ENCODE measurements at regions of chr5 and their contacts with region 1.

Region 1: DNA sequence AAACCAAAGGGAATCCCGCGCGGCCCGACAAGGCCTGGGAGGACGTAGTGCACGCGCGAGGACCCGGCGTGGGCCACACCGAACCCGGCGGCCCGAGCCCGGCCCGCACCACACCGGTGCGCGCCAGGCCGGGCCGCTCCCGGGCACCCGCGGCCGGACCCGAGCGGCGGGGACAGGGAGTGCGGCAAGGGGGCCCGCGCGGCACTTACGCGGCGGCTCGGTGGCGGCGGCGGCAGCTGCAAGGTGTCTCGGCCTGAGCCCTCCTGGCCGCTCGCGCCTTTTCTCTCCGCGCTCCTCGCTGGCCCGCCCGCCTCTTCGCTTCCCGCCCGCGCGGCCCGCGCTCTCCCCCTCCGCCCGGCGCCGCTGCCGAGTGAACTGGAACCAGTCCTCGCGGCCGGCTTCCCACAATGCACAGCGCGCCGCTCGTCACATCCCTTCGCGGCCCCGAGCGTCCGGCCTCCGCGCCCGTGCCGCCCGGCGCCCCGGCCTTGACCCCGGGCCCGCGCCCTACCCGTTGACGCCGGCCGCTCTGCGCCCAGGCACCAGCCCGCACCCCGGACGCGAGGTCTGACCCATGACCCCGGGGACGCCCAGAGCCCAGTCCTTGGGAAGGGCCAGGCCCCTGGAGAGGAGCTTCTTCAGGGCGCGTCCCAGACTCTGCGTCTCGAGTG is at the start of gene MACROH2A1:
- DNase-seq: peak; percentile 81
- H3K4me3 Mint-ChIP-seq: peak within 1 kb of the TSS; percentile 94
- H3K27ac Mint-ChIP-seq: peak within 1 kb of the TSS; percentile 98
- H3K4me1 Mint-ChIP-seq: peaks cover 46% of the 10 kb centered on the region
- H3K27me3 Mint-ChIP-seq: peaks cover 9% of the 10 kb centered on the region
- total RNA-seq, gene MACROH2A1: 285 and 302 TPM in 2 replicates

Region 2: GRCh38 chr5:135364421-135365262 is 34.3 kb before region 1 on chr5:
- intact Hi-C with region 1: loop called (anchors 5 kb)
- DNase-seq: no peak
- H3K4me3 Mint-ChIP-seq: no peak overlapping the region
- H3K27ac Mint-ChIP-seq: no peak overlapping the region
- H3K4me1 Mint-ChIP-seq: peaks cover 42% of the 10 kb centered on the region
- H3K27me3 Mint-ChIP-seq: no peaks in the 10 kb centered on the region

Region 3: GRCh38 chr5:135376961-135377624 is 21.9 kb before region 1 on chr5:
- intact Hi-C with region 1: loop called (anchors 1 kb)
- DNase-seq: no peak
- H3K4me3 Mint-ChIP-seq: peak overlapping the region; percentile 3
- H3K27ac Mint-ChIP-seq: peak overlapping the region; percentile 53
- H3K4me1 Mint-ChIP-seq: peaks cover 88% of the 10 kb centered on the region
- H3K27me3 Mint-ChIP-seq: no peaks in the 10 kb centered on the region

Region 4: DNA sequence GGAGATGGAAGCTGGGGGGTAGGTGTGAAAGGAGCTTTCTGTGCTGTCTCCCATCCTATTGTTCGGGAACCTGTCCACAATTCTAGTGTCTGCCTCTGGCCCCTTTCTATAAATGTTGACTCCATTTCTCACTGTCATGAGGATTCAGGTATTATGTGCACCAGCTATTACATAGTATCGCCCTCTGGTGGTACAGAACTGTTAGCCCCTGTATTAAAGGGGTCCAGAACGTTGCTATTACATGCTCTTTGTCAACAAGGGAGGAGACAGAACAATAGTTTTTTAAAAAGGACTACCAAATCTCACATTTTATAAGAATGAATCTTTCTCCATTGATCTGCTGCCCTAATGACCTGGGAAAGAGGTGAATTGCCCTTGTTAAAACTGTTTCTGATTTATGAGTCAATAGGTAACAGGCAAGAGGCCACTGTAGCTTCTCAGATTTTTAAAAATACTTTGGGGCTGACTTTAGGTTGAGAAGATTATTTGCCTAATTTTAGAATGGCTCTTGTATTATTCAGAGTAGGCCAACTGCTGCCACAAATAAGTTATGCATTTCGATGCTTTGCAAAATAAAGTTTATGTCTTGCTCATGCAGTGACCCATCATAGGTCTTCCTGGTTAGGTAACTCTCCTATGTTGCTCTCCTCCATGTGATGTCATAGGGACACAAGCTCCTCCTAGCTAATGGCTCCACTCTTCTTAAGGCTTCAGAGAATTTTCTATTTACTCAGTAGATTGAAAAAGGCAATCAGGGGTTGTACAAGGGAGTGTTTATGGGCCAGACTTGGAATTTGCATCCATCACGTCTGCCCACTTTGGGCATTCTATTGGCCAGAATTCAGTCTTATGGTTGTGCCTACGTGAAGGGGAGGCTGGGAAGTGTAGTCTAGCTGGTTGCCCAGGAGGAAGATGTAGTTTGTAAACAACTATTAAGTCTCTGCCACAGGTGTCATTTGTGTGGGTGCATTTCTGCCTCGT is 27.4 kb after region 1 on chr5:
- intact Hi-C with region 1: loop called (anchors 2 kb)
- DNase-seq: peak; percentile 19
- H3K4me3 Mint-ChIP-seq: no peak overlapping the region
- H3K27ac Mint-ChIP-seq: peak overlapping the region; percentile 38
- H3K4me1 Mint-ChIP-seq: peaks cover 9% of the 10 kb centered on the region
- H3K27me3 Mint-ChIP-seq: peaks cover 11% of the 10 kb centered on the region